Activated CD4-positive, alpha-beta memory T cell treated with anti-CD3 and anti-CD28 coated beads for 36 hours (primary cell): ENCODE measurements at regions of chr12 and their contacts with region 1.

Region 1: GRCh38 chr12:10212201-10213131 is at the start of gene GABARAPL1:
- DNase-seq: peak; percentile 94
- H3K4me3 Mint-ChIP-seq: peak within 1 kb of the TSS; percentile 89
- H3K27ac Mint-ChIP-seq: peak within 1 kb of the TSS; percentile 78
- H3K4me1 Mint-ChIP-seq: peaks cover 21% of the 10 kb centered on the region
- H3K27me3 Mint-ChIP-seq: no peaks in the 10 kb centered on the region
- total RNA-seq, gene GABARAPL1: 7.2 to 8.9 TPM

Region 2: GRCh38 chr12:9667403-9668160 is 544.9 kb before region 1 on chr12:
- CTCF ChIA-PET with region 1: no interaction called
- POLR2A ChIA-PET with region 1: no interaction called
- intact Hi-C with region 1: no loop called
- DNase-seq: no peak
- H3K4me3 Mint-ChIP-seq: peak overlapping the region; percentile 93
- H3K27ac Mint-ChIP-seq: peak overlapping the region; percentile 98
- H3K4me1 Mint-ChIP-seq: peaks cover 56% of the 10 kb centered on the region
- H3K27me3 Mint-ChIP-seq: no peaks in the 10 kb centered on the region

Region 3: DNA sequence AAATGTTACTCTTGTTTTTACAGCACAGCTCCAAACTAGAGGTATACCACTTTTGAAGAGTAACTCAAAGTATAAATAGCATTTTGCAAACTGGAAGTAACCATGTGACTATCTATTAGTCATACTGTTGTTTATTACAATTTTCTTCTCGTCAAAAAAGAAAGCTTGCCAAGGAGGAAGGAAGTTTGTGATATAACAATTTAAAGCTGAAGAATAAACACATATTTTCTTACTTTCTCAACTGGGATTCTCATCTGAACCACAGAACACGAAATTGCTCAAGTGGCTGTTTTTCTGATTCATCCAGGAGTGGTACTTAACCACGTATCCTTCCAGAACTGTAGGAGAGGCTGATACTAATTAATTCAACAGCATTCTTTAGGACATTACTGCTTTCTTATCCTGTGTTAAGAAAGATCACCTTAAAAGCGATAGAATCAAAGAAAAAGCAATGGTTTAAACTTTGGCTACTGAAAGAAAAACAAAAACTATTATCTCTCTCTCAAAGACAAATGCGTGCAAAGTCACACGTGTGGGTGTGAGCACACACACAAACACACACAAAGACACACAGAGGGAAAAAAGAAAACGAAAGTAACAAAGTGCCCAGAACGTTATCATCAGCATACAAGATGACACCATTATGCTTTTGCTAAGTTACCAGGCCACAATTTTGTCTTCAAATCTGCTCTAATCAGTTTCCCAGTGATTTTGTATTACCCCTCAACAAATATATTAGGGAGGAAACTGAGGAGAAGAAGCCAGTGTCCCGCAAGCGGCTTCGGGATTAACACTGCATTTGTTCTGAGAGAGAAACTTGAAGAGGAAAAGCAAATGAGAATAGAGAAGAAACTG is 342.9 kb before region 1 on chr12 and contains the start of gene CLEC2B:
- CTCF ChIA-PET with region 1: no interaction called
- POLR2A ChIA-PET with region 1: no interaction called
- intact Hi-C with region 1: loop called (anchors 5 kb)
- DNase-seq: peak; percentile 41
- H3K4me3 Mint-ChIP-seq: peak within 1 kb of the TSS; percentile 82
- H3K27ac Mint-ChIP-seq: peak within 1 kb of the TSS; percentile 93
- H3K4me1 Mint-ChIP-seq: peaks cover 19% of the 10 kb centered on the region
- H3K27me3 Mint-ChIP-seq: no peaks in the 10 kb centered on the region
- total RNA-seq, gene CLEC2B: 12.6 to 13.7 TPM

Region 4: GRCh38 chr12:10320643-10321042 is 108.2 kb after region 1 on chr12:
- CTCF ChIA-PET with region 1: no interaction called
- POLR2A ChIA-PET with region 1: no interaction called
- intact Hi-C with region 1: loop called (anchors 1 kb)
- DNase-seq: no peak
- H3K4me3 Mint-ChIP-seq: no peak overlapping the region
- H3K27ac Mint-ChIP-seq: peak overlapping the region; percentile 46
- H3K4me1 Mint-ChIP-seq: peaks cover 24% of the 10 kb centered on the region
- H3K27me3 Mint-ChIP-seq: peaks cover 21% of the 10 kb centered on the region

Region 5: DNA sequence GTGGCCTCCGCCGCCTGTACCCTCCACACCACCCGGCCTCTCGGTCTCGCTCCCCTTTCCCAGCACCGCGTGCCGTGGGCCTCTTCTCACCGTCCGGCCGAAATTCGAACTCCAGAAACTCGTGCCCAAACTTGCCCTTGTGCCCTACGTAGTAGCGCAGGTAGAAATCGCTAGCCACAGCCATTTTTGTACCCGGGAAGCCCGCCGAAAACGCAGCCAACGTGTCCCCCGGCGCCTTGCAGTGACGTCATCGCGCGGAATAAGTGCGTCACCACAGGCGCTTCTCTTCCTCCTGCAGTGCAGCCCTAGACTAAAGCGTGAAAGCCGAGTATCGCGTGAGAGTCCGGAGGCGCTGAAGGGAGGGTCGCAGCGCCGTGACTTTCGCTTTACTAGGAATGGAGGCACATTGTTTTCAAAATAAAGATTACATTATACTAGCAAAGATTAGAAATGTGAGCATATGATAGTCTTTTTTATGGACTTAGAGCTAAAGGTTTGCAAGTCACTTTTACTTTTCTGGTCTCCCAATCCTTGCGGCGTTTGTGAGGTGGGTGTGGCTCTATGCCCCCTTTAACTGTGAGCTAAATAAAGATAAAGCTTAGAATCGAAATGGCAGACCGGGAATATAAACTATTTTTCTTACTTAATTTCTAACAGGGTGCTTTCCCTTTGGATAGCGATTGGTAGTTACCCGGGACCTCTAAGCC is 401.0 kb after region 1 on chr12 and contains the start of gene MAGOHB:
- CTCF ChIA-PET with region 1: no interaction called
- POLR2A ChIA-PET with region 1: interaction called, 4 read pairs
- intact Hi-C with region 1: loop called (anchors 1 kb)
- DNase-seq: peak; percentile 99
- H3K4me3 Mint-ChIP-seq: peak within 1 kb of the TSS; percentile 98
- H3K27ac Mint-ChIP-seq: peak within 1 kb of the TSS; percentile 99
- H3K4me1 Mint-ChIP-seq: peaks cover 34% of the 10 kb centered on the region
- H3K27me3 Mint-ChIP-seq: peaks cover 8% of the 10 kb centered on the region
- total RNA-seq, gene MAGOHB: 66.2 to 69.1 TPM

Region 6: DNA sequence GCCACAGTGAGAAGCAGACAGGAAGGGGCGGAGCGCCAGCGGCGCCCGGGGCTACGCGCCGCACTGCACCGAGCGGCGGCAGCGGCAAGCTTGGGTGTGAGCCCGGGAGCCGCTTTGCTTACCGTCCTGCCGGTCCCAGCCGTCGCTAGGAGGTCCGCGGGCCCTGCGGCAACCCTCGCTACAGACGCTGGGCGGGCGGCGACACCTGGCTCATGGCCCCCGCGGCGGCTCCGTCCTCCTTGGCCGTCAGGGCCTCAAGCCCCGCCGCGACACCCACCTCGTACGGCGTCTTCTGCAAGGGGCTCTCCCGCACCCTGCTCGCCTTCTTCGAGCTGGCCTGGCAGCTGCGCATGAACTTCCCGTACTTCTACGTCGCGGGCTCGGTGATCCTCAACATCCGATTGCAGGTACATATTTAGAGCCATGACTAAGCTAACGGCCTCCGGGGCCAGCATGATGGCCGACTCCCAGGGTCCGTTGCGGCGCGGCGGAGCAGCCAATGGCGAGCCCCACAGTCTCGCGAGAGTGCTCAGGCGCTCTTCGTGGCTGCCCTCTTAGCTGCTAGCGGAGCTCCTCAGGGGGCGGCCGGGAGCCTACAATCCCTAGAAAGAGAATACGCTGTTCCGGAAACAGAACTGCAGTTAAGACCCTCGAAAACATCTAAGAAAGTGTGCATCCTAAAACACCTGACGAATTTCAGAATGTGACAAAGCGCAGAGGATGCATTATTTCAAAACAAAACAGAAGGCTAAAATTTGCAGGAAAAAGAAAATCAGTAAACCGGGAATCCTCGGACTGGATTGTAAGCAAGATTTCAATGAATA is 958.9 kb after region 1 on chr12 and contains the start of gene SMIM10L1:
- CTCF ChIA-PET with region 1: no interaction called
- POLR2A ChIA-PET with region 1: no interaction called
- intact Hi-C with region 1: loop called (anchors 1 kb)
- DNase-seq: peak; percentile 93
- H3K4me3 Mint-ChIP-seq: peak within 1 kb of the TSS; percentile 96
- H3K27ac Mint-ChIP-seq: peak within 1 kb of the TSS; percentile 99
- H3K4me1 Mint-ChIP-seq: peaks cover 42% of the 10 kb centered on the region
- H3K27me3 Mint-ChIP-seq: no peaks in the 10 kb centered on the region
- total RNA-seq, gene SMIM10L1: 5.9 to 6.5 TPM